Heart left ventricle (tissue), 16 donors: ENCODE measurements at regions of chr17 and their contacts with region 1.

Region 1: DNA sequence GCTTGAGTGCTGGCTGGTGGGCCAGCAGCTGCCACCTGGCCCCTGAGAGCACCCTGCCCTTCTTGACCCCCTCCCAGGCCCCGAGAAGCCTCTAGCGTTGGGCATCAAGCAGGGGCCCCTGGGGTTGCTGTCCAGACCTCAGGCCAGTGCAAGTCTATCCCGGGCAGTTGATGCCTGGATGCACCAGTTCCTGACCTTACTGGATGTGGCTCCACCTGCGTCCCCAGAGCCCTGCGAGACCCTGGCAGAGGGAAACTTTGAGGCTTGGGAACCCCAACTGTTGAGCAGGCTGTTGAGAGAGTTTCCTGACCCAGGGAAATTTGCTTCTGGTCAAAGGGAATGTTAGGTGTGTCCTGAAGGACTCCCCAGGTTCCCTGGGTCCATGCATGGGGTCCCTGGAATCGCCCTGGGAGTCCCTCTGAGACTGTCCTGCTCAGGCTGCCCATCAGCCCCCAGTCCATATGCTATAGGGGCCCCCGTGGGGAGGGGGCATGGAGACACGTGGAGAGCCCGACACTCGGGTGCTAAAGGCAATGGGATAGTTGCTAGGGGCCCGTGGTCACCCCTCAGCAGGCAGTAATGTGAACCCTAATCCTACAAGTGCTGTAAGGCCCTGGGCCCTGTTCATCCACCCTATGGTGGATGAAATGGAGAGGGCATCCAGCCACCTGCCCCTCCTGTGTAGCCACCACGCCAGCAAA is 46.4 kb downstream of the RAB11FIP4 start:
- DNase-seq: no peak
- ATAC-seq: peak; percentile 9 to 25 (median 15)
- H3K4me3 ChIP-seq: no peak overlapping the region
- H3K27ac ChIP-seq: no peak overlapping the region
- H3K4me1 ChIP-seq: peaks cover 0 to 6% (median 0%) of the 10 kb centered on the region in 12 donors
- H3K27me3 ChIP-seq: peaks cover 0 to 3% (median 0%) of the 10 kb centered on the region in 9 donors
- CTCF ChIP-seq: no peak
- POLR2A ChIP-seq: no peak

Region 2: DNA sequence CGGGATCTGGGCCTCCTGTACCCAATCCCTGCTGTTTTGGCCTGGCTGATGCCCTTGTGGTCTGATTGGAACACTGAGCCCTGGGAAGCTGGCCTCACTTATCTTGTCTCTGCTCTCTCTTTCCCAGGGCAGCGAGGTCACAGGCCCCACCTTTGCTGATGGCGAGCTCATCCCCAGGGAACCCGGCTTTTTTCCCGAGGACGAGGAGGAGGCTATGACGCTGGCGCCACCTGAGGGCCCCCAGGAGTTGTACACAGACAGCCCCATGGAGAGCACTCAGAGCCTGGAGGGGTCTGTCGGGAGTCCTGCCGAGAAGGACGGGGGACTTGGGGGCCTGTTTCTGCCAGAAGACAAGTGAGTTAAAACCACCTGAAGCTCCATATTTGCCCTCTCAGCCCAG is 79.7 kb after region 1 on chr17:
- intact Hi-C with region 1: loop called in 1 of 10 experiments (anchors 2 kb)
- DNase-seq: no peak
- ATAC-seq: peak in 3 of 4 donors; percentile 46 to 63 (median 50)
- H3K4me3 ChIP-seq: no peak overlapping the region
- H3K27ac ChIP-seq: no peak overlapping the region
- H3K4me1 ChIP-seq: peaks cover 0 to 4% (median 0%) of the 10 kb centered on the region in 12 donors
- H3K27me3 ChIP-seq: no peaks in the 10 kb centered on the region
- CTCF ChIP-seq: peak in 8 of 12 donors; percentile 26 to 56 (median 36)
- POLR2A ChIP-seq: no peak

Region 3: GRCh38 chr17:31524926-31525800 is 87.3 kb after region 1 on chr17:
- intact Hi-C with region 1: loop called (anchors 1 to 2 kb)
- DNase-seq: peak; percentile 78 to 92 (median 82)
- ATAC-seq: peak; percentile 69 to 87 (median 83)
- H3K4me3 ChIP-seq: no peak overlapping the region
- H3K27ac ChIP-seq: no peak overlapping the region
- H3K4me1 ChIP-seq: peaks cover 0 to 12% (median 0%) of the 10 kb centered on the region in 12 donors
- H3K27me3 ChIP-seq: no peaks in the 10 kb centered on the region
- CTCF ChIP-seq: peak; percentile 83 to 94 (median 87)
- POLR2A ChIP-seq: no peak